ENCODE measurements at regions of chr9 and their contacts with region 1.

Region 1: GRCh38 chr9:125374443-125375309 is 113.0 kb downstream of the GAPVD1 start:
- DNase-seq: peak; percentile 52 to 96 (median 73)

Region 2: GRCh38 chr9:124771021-124771866 is 603.4 kb before region 1 on chr9 and contains the start of gene NR6A1:
- intact Hi-C with region 1: loop called (anchors 1 kb)
- DNase-seq: peak; percentile 91 to 99 (median 94)

Region 3: GRCh38 chr9:124852829-124853531 is 521.7 kb before region 1 on chr9 and contains the start of gene WDR38:
- intact Hi-C with region 1: loop called (anchors 10 kb)
- DNase-seq: peak in 9 of 10 donors; percentile 45 to 95 (median 70)

Region 4: GRCh38 chr9:125150349-125151245 is 224.1 kb before region 1 on chr9:
- intact Hi-C with region 1: no loop called
- DNase-seq: no peak

Region 5: DNA sequence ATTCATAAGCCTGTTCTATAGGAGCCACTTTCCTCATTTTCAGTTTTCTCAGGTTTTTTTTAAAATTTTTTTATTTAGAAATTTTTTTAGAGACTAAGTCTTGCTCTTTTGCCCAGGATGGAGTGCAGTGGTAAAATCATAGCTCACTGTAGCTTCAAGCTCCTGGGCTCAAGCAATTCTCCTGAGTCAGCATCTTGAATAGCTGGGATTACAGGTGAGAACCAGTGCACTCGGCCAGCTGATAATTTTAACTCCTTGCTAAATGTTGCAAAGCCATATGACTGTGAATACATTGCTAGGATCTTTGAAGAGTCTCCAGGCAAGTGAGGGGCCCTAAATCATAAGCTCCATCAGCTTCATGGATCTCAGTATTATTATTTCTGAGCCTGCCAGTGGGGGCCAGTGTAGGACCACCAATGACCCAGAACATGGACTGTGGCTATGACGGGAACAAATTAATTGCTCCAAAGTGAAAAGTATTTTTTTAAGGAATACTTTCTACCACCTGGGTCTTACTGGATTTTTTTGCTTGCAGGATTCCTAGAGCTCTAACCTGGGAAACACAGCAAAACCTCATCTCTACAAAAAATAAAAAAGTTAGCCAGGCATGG is 118.8 kb before region 1 on chr9:
- intact Hi-C with region 1: loop called (anchors 10 kb)
- DNase-seq: no peak

Measured in posterior cingulate gyrus (tissue), 11 donors.